GM10248 (cell line): ENCODE measurements at regions of chr6 and their contacts with region 1.

Region 1: GRCh38 chr6:2999618-3000557 is at the start of gene NQO2:
- DNase-seq: peak; percentile 99
- CTCF ChIP-seq: no peak

Region 2: DNA sequence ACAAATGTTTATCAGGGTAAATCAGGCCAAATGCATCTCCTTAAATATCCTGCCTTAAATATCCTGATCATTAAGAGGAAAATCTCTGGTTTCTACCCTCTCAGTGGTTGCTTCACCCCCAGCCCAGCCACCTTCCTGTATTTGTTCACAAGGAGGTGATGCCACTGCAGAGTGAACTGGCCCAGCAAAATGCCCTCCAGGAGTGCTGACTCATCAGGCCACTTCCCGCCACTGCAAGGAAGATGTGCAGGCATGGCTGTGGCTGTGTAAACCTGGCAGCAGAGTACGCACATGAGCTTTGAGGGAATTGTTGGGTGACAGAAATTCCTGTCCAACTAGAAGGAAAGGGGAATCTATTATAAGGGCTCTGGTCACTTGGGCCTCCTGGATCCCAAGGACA is 13.6 kb after region 1 on chr6:
- CTCF ChIA-PET with region 1: interaction called, 34 read pairs
- POLR2A ChIA-PET with region 1: no interaction called
- DNase-seq: no peak
- CTCF ChIP-seq: no peak

Region 3: DNA sequence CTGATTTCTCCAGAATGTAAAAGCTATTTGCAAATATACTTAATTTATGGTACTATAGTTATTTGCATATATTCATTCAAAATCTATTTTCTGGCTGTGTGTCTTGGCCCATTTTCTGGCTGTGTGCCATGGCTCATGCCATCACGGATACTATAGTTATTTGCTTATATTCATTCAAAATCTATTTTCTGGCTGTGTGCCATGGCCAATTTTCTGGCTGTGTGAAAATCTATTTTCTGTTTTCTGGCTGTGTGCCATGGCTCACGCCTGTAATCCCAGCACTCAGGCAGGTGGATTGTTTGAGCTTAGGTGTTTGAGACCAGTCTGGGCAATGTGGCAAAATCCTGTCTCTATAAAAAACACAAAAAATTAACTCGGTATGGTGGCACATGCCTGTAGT is 39.5 kb after region 1 on chr6:
- CTCF ChIA-PET with region 1: interaction called, 13 read pairs
- POLR2A ChIA-PET with region 1: no interaction called
- DNase-seq: no peak
- CTCF ChIP-seq: no peak

Region 4: DNA sequence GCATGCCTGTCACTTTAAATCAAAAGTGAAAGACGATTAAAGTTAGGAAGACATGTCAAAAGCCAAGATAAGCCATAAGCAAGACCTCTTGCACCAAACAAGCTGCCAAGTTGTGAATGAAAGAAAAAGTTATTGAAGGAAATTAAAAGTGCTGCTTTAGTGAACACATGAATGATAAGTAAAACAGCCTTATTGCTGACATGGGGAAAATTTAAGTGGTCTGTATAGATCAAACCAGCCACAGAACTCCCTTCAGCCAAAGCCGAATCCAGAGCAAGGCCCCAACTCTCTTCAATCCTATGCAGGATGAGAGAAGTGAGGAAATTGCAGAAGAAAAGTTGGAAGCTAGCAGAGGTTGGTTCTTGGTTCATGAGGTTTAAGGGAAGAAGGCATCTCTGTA is 59.1 kb after region 1 on chr6:
- CTCF ChIA-PET with region 1: interaction called, 30 read pairs
- POLR2A ChIA-PET with region 1: interaction called, 12 read pairs
- DNase-seq: no peak
- CTCF ChIP-seq: no peak